Sciatic nerve (tissue), 2 donors: ENCODE measurements at regions of chr21 and their contacts with region 1.

Region 1: DNA sequence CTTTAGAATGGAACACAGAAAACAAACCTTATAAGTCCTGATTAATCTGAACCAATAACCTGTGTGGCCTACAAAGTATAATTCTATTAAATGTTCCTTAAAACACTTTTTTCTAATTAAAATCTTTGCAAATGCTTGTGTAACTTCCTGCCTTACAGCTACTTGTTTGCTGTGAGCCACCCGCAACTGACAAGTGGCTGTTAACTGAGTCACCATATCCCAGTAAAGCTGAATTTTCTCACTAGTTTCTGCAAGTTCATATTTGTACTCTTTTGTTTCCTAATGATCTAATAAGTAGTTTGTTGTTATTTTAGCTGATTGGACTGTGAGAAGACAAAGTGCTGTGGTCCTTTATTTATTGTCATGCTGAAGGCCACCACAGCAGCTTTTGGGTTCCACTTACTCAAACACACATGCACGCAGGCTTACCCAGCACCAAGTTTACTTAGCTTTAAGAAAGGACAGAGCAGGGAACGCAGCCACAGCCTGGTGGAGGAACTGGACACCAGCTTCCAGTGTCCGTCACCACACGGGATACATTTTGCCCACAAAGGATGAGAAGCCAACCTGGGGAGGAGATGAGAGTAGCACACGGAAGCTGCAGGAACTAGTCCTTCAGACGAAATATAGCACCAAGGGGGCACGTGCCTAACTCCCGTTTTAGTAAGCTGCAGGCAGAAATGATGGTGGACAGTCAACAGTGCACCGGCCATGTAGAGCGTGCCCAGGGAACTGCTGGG is 47.8 kb downstream of the LCA5L start:
- DNase-seq: no peak
- ATAC-seq: no peak

Region 2: GRCh38 chr21:39094847-39095579 is 302.8 kb before region 1 on chr21:
- intact Hi-C with region 1: no loop called
- DNase-seq: no peak
- ATAC-seq: peak; percentile 38

Region 3: DNA sequence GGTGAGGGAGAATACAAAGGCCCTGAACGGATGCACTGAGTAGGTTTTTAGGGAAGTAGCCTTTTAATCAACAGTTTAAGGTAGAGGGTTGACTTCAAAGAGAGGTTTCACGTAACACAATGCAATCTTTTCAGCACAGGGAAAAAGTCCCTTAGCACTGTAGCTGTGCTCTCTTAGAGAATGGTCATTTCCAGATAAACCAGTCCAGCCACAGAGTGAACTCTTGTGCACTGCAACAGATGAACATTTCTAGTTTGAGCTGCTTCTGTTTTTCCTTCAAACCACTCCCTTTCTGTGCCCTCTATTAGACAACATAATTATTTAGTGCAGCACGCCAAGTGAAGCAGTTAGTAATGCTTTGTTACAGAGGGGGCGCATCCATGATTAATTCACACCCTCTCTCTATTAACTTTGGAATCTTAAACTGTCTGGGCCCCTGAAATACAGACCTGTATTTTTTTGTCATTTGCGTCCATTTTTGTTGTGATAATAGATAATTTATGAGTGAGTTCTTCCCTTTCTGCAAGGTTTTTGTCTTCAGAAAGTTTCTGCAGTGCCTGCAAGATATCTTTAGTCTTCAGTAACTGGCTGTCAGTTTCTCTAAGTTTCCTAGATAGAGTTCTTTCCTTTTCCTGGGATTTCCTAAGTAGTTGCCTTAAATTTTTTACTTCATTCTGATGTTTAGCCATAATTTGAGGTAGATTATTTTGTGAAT is 24.9 kb after region 1 on chr21:
- intact Hi-C with region 1: loop called (anchors 1 kb)
- DNase-seq: no peak
- ATAC-seq: peak; percentile 24

Region 4: DNA sequence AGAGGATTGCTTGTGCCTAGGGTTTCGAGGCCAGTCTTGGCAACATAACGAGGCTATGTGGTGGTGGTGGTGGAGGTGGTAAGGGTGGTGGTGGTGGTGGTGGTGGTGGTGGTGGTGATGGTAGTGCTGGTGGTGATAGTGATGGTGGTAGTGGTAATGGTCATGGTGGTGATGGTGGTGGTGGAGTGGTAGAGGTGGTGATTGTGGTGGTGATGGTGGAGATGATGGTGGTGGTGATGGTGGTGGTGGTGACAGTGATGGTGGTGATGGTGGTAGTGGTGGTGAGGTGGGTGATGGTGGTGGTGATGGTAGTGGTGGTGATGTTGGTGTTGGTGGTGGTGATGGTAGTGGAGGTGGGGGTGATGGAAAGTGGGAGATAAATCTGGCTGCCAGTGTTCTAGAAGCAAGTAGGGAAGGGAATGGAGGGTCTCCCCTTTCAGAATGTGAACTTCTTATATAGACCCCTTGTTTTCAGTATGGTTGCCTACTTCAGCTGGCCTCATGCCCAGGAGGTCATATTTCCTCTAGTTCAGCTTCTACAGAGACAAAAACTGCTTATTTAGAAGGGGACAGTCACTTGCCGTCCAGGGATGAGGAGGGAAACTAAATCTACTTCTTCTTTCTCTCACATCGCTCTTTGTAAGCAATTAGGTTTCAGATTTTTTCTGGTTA is 81.5 kb after region 1 on chr21:
- intact Hi-C with region 1: no loop called
- DNase-seq: no peak
- ATAC-seq: no peak